Panc1 (cell line): ENCODE measurements at regions of chr5 and their contacts with region 1.

Region 1: DNA sequence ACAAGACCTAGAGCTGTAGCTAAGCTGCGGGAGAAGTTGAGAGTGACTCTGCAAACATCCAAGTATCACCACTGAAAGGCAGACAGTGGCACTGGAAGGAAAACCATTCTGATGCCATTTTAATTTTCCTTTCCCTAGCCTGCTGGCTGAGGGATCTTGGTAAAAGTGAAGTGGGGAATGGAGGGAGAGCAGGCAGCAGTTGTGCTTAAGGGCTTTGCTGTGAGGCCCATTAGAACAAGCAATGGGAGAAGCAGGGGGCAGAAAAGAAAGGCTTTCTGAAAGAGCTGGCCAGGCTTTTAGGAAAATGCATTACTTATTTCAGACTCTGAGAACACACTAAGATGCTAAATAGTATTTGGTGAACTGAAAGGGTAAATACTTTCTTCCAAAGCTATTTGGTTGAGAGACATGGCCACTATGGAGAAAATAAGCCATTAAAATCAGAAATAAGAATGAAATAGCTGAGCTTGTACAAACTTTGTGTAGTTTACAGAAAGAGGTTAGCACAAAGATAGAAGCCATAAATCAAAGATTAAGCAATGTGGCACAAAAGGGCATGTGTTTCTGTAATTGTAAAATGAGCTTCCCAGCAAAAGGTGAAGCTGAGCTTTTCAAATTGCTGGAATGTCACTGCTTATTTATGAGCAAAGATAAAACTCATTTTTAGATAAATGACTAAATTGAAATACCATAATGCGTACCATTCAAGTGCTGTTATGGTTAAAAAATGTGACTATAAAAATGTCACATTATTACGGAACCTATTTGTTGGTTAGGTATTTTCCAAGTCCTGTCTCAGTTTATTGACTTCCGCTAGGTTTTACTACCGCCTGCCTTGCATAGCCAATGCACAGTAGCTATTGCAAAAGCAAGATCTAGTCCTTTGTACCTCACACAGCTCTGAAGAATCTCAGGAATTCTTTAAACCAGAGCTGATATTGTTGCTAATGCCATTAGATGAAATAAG is 20.8 kb downstream of the SNCAIP start:
- DNase-seq: no peak
- ATAC-seq: no peak
- H3K4me3 ChIP-seq: no peak overlapping the region
- H3K27ac ChIP-seq: no peak overlapping the region
- H3K4me1 ChIP-seq: no peaks in the 10 kb centered on the region
- H3K27me3 ChIP-seq: no peaks in the 10 kb centered on the region
- CTCF ChIP-seq: no peak

Region 2: DNA sequence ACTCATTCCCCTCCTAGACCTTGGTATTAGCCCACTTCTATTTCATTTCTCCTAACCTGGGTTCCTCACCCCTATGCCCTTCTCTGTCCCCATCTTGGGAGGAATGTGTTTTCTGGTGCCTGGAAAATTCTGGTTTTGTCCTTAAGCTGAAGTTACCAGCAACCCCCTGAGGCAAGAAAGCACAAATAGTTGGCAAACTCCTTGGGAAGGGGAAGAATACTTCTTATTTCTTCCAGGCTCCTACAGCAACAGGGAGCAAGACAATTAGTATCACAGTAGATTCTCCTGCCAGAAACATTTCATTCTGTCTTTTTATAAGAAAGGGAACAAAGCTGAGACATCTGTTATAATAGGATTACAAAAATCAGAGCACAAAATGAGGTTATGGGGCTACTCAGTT is 121.7 kb after region 1 on chr5:
- CTCF ChIA-PET with region 1: no interaction called
- POLR2A ChIA-PET with region 1: interaction called, 11 read pairs
- in situ Hi-C with region 1: no loop called
- intact Hi-C with region 1: no loop called
- DNase-seq: no peak
- ATAC-seq: no peak
- H3K4me3 ChIP-seq: no peak overlapping the region
- H3K27ac ChIP-seq: no peak overlapping the region
- H3K4me1 ChIP-seq: no peaks in the 10 kb centered on the region
- H3K27me3 ChIP-seq: no peaks in the 10 kb centered on the region
- CTCF ChIP-seq: no peak